HepG2 (cell line): ENCODE measurements at regions of chr2 and their contacts with region 1.

Region 1: GRCh38 chr2:172465417-172466334 is 38.3 kb downstream of the ITGA6 start:
- DNase-seq: peak; percentile 95
- ATAC-seq: peak; percentile 93
- H3K4me3 ChIP-seq: peak overlapping the region in 1 of 3 experiments; percentile 36; a peak in 2 of 6 replicates
- H3K27ac ChIP-seq: peak overlapping the region; percentile 26
- H3K4me1 ChIP-seq: peaks cover 48% of the 10 kb centered on the region
- H3K27me3 ChIP-seq: no peaks in the 10 kb centered on the region
- CTCF ChIP-seq: peak; percentile 93
- EP300 ChIP-seq: peak in 1 of 2 experiments; percentile 74; a peak in 1 of 4 replicates
- POLR2A ChIP-seq: no peak
- RAD21 ChIP-seq: peak; percentile 93

Region 2: DNA sequence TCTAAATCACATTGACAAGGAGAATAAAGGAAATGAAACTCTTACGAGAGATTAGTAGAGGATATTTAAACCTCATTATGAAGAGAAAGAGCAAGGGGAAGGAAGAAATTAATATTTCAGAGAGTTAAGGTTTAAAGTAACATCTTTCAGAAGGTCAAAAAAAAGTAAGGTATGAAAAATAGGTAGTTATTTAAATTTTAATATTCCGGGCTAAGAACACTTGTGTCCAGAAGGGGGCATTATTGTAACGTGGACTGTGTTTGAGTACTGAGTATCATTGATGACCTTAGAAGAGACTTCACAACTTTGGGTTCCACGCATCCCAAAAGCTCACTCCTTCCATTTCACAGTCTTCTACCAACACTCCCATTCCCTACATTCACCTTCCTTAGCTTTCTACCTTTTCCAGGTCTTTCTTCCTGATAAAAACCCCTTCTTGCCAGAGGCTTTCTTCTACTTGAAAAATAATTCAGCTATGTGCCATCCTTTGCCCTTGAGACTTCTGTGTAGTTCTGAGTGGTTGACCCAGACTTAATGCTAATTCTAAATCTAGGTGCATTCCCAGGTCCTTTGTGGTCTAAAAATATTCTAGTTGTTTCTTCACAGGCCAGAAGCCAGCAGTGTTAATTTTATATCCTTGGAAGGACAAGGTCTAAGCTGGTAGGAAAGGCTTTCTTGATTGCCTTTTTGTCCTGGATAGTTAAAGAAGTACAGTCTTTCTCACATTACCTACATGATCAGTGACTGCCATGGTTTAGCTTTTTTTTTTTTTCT is 761.9 kb before region 1 on chr2:
- CTCF ChIA-PET with region 1: no interaction called
- POLR2A ChIA-PET with region 1: no interaction called
- in situ Hi-C with region 1: no loop called
- intact Hi-C with region 1: loop called (anchors 10 kb)
- DNase-seq: peak; percentile 53
- ATAC-seq: peak; percentile 69
- H3K4me3 ChIP-seq: no peak overlapping the region
- H3K27ac ChIP-seq: no peak overlapping the region
- H3K4me1 ChIP-seq: peaks cover 8% of the 10 kb centered on the region; the same call in 1 of the 2 replicates
- H3K27me3 ChIP-seq: no peaks in the 10 kb centered on the region
- CTCF ChIP-seq: peak; percentile 73
- EP300 ChIP-seq: no peak
- POLR2A ChIP-seq: no peak
- RAD21 ChIP-seq: peak; percentile 73

Region 3: GRCh38 chr2:172200495-172201085 is 265.1 kb before region 1 on chr2:
- CTCF ChIA-PET with region 1: interaction called, 3 read pairs
- POLR2A ChIA-PET with region 1: no interaction called
- in situ Hi-C with region 1: no loop called
- intact Hi-C with region 1: loop called (anchors 1 kb)
- DNase-seq: no peak
- ATAC-seq: no peak
- H3K4me3 ChIP-seq: no peak overlapping the region
- H3K27ac ChIP-seq: no peak overlapping the region
- H3K4me1 ChIP-seq: no peaks in the 10 kb centered on the region
- H3K27me3 ChIP-seq: 0 out of 5 replicates have a peak, but pooled peaks cover 0 to 7% of the 10 kb centered on the region in 2 experiments
- CTCF ChIP-seq: peak; percentile 54
- EP300 ChIP-seq: no peak
- POLR2A ChIP-seq: no peak
- RAD21 ChIP-seq: no peak

Region 4: GRCh38 chr2:172285010-172285621 is 180.6 kb before region 1 on chr2:
- CTCF ChIA-PET with region 1: no interaction called
- POLR2A ChIA-PET with region 1: no interaction called
- in situ Hi-C with region 1: no loop called
- intact Hi-C with region 1: loop called (anchors 10 kb)
- DNase-seq: no peak
- ATAC-seq: peak; percentile 61
- H3K4me3 ChIP-seq: no peak overlapping the region
- H3K27ac ChIP-seq: no peak overlapping the region
- H3K4me1 ChIP-seq: no peaks in the 10 kb centered on the region
- H3K27me3 ChIP-seq: 0 out of 5 replicates have a peak, but pooled peaks cover 0 to 9% of the 10 kb centered on the region in 2 experiments
- CTCF ChIP-seq: no peak
- EP300 ChIP-seq: no peak
- POLR2A ChIP-seq: no peak
- RAD21 ChIP-seq: no peak

Region 5: DNA sequence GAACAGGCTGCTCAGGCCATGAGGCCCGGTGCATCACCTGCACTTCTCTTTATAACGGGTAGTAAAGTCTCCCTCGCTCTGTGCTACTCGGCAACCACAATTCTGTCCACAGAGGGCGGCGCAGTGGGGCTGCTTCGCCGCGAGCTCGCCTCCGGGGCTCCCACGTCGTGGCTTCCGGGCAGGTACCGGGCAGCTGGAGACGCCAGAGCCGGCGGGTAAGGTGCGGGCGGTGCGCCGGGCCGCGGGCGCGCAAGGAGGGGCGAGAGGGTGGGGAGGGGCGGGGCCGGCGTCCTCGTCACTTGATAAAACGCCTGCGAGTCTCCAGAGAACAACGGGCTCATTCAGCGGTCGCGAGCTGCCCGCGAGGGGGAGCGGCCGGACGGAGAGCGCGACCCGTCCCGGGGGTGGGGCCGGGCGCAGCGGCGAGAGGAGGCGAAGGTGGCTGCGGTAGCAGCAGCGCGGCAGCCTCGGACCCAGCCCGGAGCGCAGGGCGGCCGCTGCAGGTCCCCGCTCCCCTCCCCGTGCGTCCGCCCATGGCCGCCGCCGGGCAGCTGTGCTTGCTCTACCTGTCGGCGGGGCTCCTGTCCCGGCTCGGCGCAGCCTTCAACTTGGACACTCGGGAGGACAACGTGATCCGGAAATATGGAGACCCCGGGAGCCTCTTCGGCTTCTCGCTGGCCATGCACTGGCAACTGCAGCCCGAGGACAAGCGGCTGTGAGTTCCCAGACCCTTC is 38.3 kb before region 1 on chr2 and contains the start of gene ITGA6:
- CTCF ChIA-PET with region 1: interaction called, 17 read pairs
- POLR2A ChIA-PET with region 1: interaction called, 28 read pairs
- in situ Hi-C with region 1: loop called (anchors 5 kb)
- intact Hi-C with region 1: loop called (anchors 1 kb)
- DNase-seq: peak; percentile 89
- ATAC-seq: peak; percentile 87
- H3K4me3 ChIP-seq: peak within 1 kb of the TSS; percentile 65 to 97 (median 90)
- H3K27ac ChIP-seq: peak within 1 kb of the TSS; percentile 86
- H3K4me1 ChIP-seq: peaks cover 39% of the 10 kb centered on the region
- H3K27me3 ChIP-seq: peaks cover 1 to 11% of the 10 kb centered on the region in 2 experiments; a peak in 2 of 5 replicates
- CTCF ChIP-seq: peak; percentile 53; the same call in 1 of the 2 replicates
- EP300 ChIP-seq: peak in 1 of 2 experiments; percentile 28; a peak in 1 of 4 replicates
- POLR2A ChIP-seq: peak; percentile 91 to 93
- RAD21 ChIP-seq: peak; percentile 58; the same call in 1 of the 2 replicates
- total RNA-seq, gene ITGA6: 49.6 and 92.5 TPM in 2 replicates

Region 6: DNA sequence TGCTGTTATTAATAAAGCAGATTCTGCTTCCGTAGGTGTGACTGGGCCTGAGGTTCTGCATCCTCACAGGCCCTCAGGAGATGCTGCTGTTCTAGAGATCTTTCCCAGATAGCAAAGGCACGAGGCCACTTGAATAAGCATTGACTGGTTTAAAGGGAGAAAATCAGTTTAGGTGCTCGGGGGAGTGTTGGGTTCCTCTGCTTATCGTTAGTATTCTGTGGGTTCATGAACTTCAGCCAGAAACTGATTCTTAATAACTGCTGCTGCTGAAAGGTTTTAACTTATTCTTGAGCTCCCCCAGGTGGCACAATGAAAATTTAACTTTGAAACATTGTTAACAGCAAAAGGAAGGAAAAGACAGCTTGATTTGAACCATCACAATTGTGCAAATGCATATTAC is 18.6 kb after region 1 on chr2:
- CTCF ChIA-PET with region 1: interaction called, 3 read pairs
- POLR2A ChIA-PET with region 1: no interaction called
- in situ Hi-C with region 1: no loop called
- intact Hi-C with region 1: loop called (anchors 1 kb)
- DNase-seq: peak; percentile 41
- ATAC-seq: no peak
- H3K4me3 ChIP-seq: no peak overlapping the region
- H3K27ac ChIP-seq: no peak overlapping the region
- H3K4me1 ChIP-seq: peaks cover 42% of the 10 kb centered on the region
- H3K27me3 ChIP-seq: no peaks in the 10 kb centered on the region
- CTCF ChIP-seq: peak; percentile 58
- EP300 ChIP-seq: no peak
- POLR2A ChIP-seq: no peak
- RAD21 ChIP-seq: peak; percentile 53; the same call in 1 of the 2 replicates

Region 7: GRCh38 chr2:172743143-172743542 is 277.5 kb after region 1 on chr2:
- CTCF ChIA-PET with region 1: no interaction called
- POLR2A ChIA-PET with region 1: no interaction called
- in situ Hi-C with region 1: no loop called
- intact Hi-C with region 1: no loop called
- DNase-seq: no peak
- ATAC-seq: no peak
- H3K4me3 ChIP-seq: no peak overlapping the region
- H3K27ac ChIP-seq: no peak overlapping the region
- H3K4me1 ChIP-seq: peaks cover under 1% of the 10 kb centered on the region; the same call in 1 of the 2 replicates
- H3K27me3 ChIP-seq: peaks cover 0 to 11% of the 10 kb centered on the region in 2 experiments; a peak in 2 of 5 replicates
- CTCF ChIP-seq: no peak
- EP300 ChIP-seq: no peak
- POLR2A ChIP-seq: no peak
- RAD21 ChIP-seq: no peak

Region 8: GRCh38 chr2:172995323-172996244 is 529.9 kb after region 1 on chr2:
- CTCF ChIA-PET with region 1: no interaction called
- POLR2A ChIA-PET with region 1: no interaction called
- in situ Hi-C with region 1: no loop called
- intact Hi-C with region 1: no loop called
- DNase-seq: peak; percentile 86
- ATAC-seq: peak; percentile 94
- H3K4me3 ChIP-seq: no peak overlapping the region
- H3K27ac ChIP-seq: no peak overlapping the region
- H3K4me1 ChIP-seq: peaks cover 39% of the 10 kb centered on the region
- H3K27me3 ChIP-seq: no peaks in the 10 kb centered on the region; a peak in 1 of 5 replicates
- CTCF ChIP-seq: peak; percentile 51
- EP300 ChIP-seq: peak in 1 of 2 experiments; percentile 53; a peak in 2 of 4 replicates
- POLR2A ChIP-seq: no peak
- RAD21 ChIP-seq: no peak

Region 9: GRCh38 chr2:173059927-173060565 is 594.4 kb after region 1 on chr2:
- CTCF ChIA-PET with region 1: no interaction called
- POLR2A ChIA-PET with region 1: no interaction called
- in situ Hi-C with region 1: no loop called
- intact Hi-C with region 1: no loop called
- DNase-seq: no peak
- ATAC-seq: no peak
- H3K4me3 ChIP-seq: no peak overlapping the region
- H3K27ac ChIP-seq: no peak overlapping the region
- H3K4me1 ChIP-seq: peaks cover 44% of the 10 kb centered on the region
- H3K27me3 ChIP-seq: no peaks in the 10 kb centered on the region
- CTCF ChIP-seq: no peak
- EP300 ChIP-seq: no peak
- POLR2A ChIP-seq: no peak
- RAD21 ChIP-seq: no peak